CD8-positive, alpha-beta T cell (primary cell): ENCODE measurements at regions of chr11 and their contacts with region 1.

Region 1: DNA sequence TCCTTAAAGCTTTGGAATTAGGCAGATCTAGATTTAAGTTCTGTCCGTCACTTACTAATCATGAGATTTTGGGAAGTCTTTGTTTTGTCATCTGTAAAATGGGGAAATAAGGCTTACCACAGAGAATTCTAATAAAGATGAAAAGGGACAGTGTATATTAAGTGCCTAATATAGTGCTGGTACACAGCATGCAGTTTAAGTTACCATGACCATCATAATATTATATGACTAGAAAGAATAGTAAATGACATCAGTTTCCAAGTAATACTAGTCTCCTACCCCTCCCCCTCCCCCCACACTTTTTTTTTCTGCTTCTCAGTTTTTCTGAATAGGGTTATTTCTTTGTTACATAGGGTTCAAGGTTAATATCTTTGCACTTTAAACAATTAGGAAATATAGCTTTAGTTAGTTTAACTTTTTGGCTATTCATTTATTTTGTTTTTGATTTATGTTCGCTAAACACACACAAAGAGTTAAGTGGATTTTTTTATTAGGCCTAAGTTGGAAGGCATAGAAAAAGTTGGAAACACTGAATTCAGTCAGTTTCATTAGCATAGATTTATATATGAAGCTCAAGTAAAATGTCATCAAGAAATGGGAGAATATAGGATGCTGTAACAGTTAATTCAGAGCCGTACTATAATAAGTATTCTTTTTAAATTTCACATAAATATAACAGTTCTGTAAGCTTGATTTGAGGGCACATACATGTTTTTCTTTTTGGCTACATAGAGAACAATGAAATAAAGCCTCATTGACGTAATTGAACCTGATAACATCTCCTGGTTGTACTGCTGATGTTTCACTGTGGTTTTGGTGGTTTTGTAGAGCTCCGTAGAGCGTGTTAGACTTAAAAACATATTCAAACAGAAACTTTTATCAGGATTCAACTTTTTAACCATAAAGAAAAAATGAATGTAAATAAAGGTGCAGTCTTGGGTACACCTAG is 121.2 kb downstream of the PDE3B start:
- DNase-seq: peak in 5 of 9 experiments; percentile 22 to 96 (median 59)
- ATAC-seq: peak; percentile 75
- H3K4me3 ChIP-seq: peak overlapping the region in 1 of 2 experiments; percentile 3
- H3K4me3 Mint-ChIP-seq: peak overlapping the region; percentile 72
- H3K27ac ChIP-seq: peak overlapping the region; percentile 36 to 61
- H3K27ac Mint-ChIP-seq: no peak overlapping the region
- H3K4me1 ChIP-seq: peaks cover 86% of the 10 kb centered on the region
- H3K4me1 Mint-ChIP-seq: peaks cover 48% of the 10 kb centered on the region
- H3K27me3 ChIP-seq: peaks cover 0 to 3% of the 10 kb centered on the region in 2 experiments
- H3K27me3 Mint-ChIP-seq: no peaks in the 10 kb centered on the region
- CTCF ChIP-seq: no peak

Region 2: GRCh38 chr11:14119357-14119756 is 645.5 kb before region 1 on chr11:
- CTCF ChIA-PET with region 1: no interaction called
- POLR2A ChIA-PET with region 1: no interaction called
- intact Hi-C with region 1: no loop called
- DNase-seq: peak in 2 of 9 experiments; percentile 16 to 50
- ATAC-seq: no peak
- H3K4me3 ChIP-seq: no peak overlapping the region
- H3K4me3 Mint-ChIP-seq: no peak overlapping the region
- H3K27ac ChIP-seq: no peak overlapping the region
- H3K27ac Mint-ChIP-seq: no peak overlapping the region
- H3K4me1 ChIP-seq: no peaks in the 10 kb centered on the region
- H3K4me1 Mint-ChIP-seq: peaks cover 11% of the 10 kb centered on the region
- H3K27me3 ChIP-seq: no peaks in the 10 kb centered on the region
- H3K27me3 Mint-ChIP-seq: no peaks in the 10 kb centered on the region
- CTCF ChIP-seq: no peak

Region 3: GRCh38 chr11:14537134-14537599 is 227.7 kb before region 1 on chr11:
- CTCF ChIA-PET with region 1: interaction called, 5 read pairs
- POLR2A ChIA-PET with region 1: interaction called, 3 read pairs
- intact Hi-C with region 1: loop called (anchors 1 to 5 kb)
- DNase-seq: peak; percentile 19 to 76 (median 50)
- ATAC-seq: peak; percentile 85
- H3K4me3 ChIP-seq: no peak overlapping the region
- H3K4me3 Mint-ChIP-seq: peak overlapping the region; percentile 77
- H3K27ac ChIP-seq: peak overlapping the region in 1 of 2 experiments; percentile 25
- H3K27ac Mint-ChIP-seq: peak overlapping the region; percentile 87
- H3K4me1 ChIP-seq: peaks cover 15% of the 10 kb centered on the region
- H3K4me1 Mint-ChIP-seq: peaks cover 38% of the 10 kb centered on the region
- H3K27me3 ChIP-seq: no peaks in the 10 kb centered on the region
- H3K27me3 Mint-ChIP-seq: no peaks in the 10 kb centered on the region
- CTCF ChIP-seq: peak; percentile 92

Region 4: GRCh38 chr11:14727746-14728145 is 37.1 kb before region 1 on chr11:
- CTCF ChIA-PET with region 1: no interaction called
- POLR2A ChIA-PET with region 1: interaction called, 3 read pairs
- intact Hi-C with region 1: loop called in 1 of 2 experiments (anchors 5 kb)
- DNase-seq: no peak
- ATAC-seq: no peak
- H3K4me3 ChIP-seq: no peak overlapping the region
- H3K4me3 Mint-ChIP-seq: no peak overlapping the region
- H3K27ac ChIP-seq: no peak overlapping the region
- H3K27ac Mint-ChIP-seq: peak overlapping the region; percentile 9
- H3K4me1 ChIP-seq: peaks cover 50% of the 10 kb centered on the region
- H3K4me1 Mint-ChIP-seq: peaks cover 76% of the 10 kb centered on the region
- H3K27me3 ChIP-seq: no peaks in the 10 kb centered on the region
- H3K27me3 Mint-ChIP-seq: no peaks in the 10 kb centered on the region
- CTCF ChIP-seq: no peak

Region 5: GRCh38 chr11:14789879-14790484 is 25.1 kb after region 1 on chr11:
- CTCF ChIA-PET with region 1: no interaction called
- POLR2A ChIA-PET with region 1: no interaction called
- intact Hi-C with region 1: loop called in 1 of 2 experiments (anchors 2 kb)
- DNase-seq: peak in 2 of 9 experiments; percentile 35 to 54
- ATAC-seq: no peak
- H3K4me3 ChIP-seq: no peak overlapping the region
- H3K4me3 Mint-ChIP-seq: no peak overlapping the region
- H3K27ac ChIP-seq: no peak overlapping the region
- H3K27ac Mint-ChIP-seq: peak overlapping the region; percentile 79
- H3K4me1 ChIP-seq: peaks cover 2% of the 10 kb centered on the region
- H3K4me1 Mint-ChIP-seq: peaks cover 31% of the 10 kb centered on the region
- H3K27me3 ChIP-seq: no peaks in the 10 kb centered on the region
- H3K27me3 Mint-ChIP-seq: no peaks in the 10 kb centered on the region
- CTCF ChIP-seq: peak; percentile 68